Psoas muscle (tissue), 8 donors: ENCODE measurements at regions of chr2 and their contacts with region 1.

Region 1: GRCh38 chr2:85772019-85772745 is 18.4 kb downstream of the ATOH8 start:
- DNase-seq: peak; percentile 99
- ATAC-seq: peak; percentile 82 to 90 (median 87)
- H3K4me3 ChIP-seq: peak overlapping the region; percentile 47
- H3K27ac ChIP-seq: peak overlapping the region; percentile 98
- H3K4me1 ChIP-seq: peaks cover 92% of the 10 kb centered on the region
- H3K27me3 ChIP-seq: no peaks in the 10 kb centered on the region
- CTCF ChIP-seq: no peak

Region 2: GRCh38 chr2:85728883-85729824 is 43.0 kb before region 1 on chr2:
- intact Hi-C with region 1: loop called in 1 of 2 experiments (anchors 5 kb)
- DNase-seq: peak; percentile 94 to 97
- ATAC-seq: peak; percentile 79 to 81 (median 80)
- H3K4me3 ChIP-seq: no peak overlapping the region
- H3K27ac ChIP-seq: peak overlapping the region; percentile 98
- H3K4me1 ChIP-seq: peaks cover 48% of the 10 kb centered on the region
- H3K27me3 ChIP-seq: no peaks in the 10 kb centered on the region
- CTCF ChIP-seq: peak; percentile 97

Region 3: GRCh38 chr2:85741833-85742455 is 30.2 kb before region 1 on chr2:
- intact Hi-C with region 1: loop called in 1 of 2 experiments (anchors 2 kb)
- DNase-seq: peak; percentile 84 to 90
- ATAC-seq: peak; percentile 71 to 79 (median 72)
- H3K4me3 ChIP-seq: no peak overlapping the region
- H3K27ac ChIP-seq: peak overlapping the region; percentile 94
- H3K4me1 ChIP-seq: peaks cover 83% of the 10 kb centered on the region
- H3K27me3 ChIP-seq: no peaks in the 10 kb centered on the region
- CTCF ChIP-seq: no peak

Region 4: DNA sequence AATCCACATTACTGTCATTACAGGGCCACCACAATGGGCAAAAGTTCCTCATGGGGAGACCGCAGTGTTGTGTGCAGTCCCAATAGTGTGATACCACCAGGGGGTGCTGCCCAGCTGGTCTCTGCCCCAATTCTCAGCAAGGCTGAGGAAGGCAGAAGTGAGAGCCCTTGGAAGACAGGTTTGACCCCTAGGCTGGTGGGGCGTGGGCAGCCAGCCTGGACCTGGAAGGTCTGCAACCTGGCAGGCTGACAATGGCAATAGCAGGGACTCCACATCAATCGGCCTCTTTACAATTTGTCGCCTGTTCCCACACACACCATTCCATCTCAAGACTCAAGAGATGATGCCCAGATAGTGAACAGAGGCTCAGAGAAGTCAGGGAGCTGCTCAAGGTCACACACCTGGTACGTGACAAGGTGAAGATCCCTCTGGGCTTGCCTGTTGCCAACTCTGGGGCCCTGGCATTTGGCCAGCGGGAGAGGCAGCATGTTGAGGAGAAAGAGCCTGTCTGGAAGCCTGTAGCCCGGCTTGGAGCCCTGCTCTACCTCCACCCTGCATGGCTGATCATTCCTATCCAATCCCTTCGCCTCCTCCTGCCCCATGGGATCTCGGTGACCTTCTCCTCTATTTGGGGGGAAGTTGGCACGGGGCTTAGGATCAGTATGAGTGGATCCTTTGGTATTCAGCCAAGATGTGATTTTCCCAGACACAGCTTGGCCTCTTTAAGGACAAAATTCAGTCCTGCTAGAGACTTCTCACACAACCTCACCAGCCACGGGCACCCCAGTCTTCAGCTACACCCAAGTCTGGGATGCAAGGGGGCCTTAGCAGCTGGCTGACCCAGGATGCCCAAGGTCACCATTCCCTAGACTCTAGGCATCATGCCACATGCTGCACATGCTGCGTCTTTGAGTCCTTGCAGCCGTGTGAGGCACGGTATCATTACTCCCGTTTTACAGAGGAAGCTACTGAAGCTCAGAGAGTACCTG is 21.3 kb before region 1 on chr2:
- intact Hi-C with region 1: loop called in 1 of 2 experiments (anchors 2 kb)
- DNase-seq: peak; percentile 75 to 84
- ATAC-seq: peak; percentile 57 to 68 (median 62)
- H3K4me3 ChIP-seq: peak overlapping the region; percentile 1
- H3K27ac ChIP-seq: peak overlapping the region; percentile 30
- H3K4me1 ChIP-seq: peaks cover 45% of the 10 kb centered on the region
- H3K27me3 ChIP-seq: no peaks in the 10 kb centered on the region
- CTCF ChIP-seq: peak; percentile 83

Region 5: DNA sequence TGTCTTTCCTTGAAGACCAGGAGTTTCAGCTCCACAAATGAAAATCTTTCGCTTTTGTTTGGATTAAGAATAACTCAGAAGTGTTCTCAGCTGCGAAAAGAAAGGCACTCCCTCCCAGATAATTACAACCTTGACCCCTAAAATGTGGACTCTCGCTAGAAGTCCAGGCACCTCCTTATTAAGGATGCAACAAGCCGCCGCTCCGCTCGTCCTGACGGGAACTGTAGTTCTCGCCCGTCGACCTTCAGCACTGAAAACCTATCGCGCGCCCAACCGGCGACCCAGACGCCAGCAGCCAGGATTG is 422.5 kb after region 1 on chr2:
- intact Hi-C with region 1: no loop called
- DNase-seq: no peak
- ATAC-seq: no peak
- H3K4me3 ChIP-seq: peak overlapping the region; percentile 94
- H3K27ac ChIP-seq: peak overlapping the region; percentile 100
- H3K4me1 ChIP-seq: peaks cover 56% of the 10 kb centered on the region
- H3K27me3 ChIP-seq: no peaks in the 10 kb centered on the region
- CTCF ChIP-seq: no peak